CD8-positive, alpha-beta T cell (primary cell): ENCODE measurements at regions of chr2 and their contacts with region 1.

Region 1: DNA sequence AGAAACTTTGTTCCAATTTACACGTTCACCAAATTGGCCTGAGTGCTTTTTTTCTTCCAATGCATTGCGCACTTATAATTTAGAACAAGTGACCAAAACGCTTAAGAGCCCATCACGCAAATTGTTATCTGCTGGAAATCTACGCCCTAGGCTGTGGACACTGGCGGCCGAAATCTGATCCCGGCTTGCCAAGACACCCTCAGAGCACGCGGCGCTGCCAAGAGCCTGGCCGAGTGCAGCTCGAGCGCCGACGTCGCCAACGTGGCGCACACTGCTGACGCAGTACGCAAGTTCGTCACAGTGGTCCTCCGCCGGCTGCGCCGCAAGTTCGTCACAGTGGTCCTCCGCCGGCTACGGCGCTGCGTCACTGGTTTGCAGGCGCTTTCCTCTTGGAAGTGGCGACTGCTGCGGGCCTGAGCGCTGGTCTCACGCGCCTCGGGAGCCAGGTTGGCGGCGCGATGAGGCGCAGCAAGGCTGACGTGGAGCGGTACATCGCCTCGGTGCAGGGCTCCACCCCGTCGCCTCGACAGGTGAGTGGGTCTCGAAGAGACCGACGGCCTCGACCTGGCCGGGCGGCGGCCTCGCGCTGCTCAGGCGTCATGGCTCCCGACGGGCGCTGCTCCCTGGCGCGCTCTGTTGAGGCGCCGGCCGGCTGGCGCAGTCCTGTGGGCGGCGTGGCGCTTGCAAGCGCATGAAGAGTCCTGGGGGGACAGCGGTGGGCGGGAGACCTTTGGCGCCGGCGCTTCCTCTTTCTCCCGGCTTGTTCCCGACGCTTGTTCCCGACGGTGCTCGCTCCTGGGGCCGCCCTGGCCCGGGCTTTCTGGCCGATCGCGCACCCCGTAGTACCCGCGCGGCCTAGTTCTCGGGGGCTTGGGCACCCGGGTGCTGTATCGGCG is at the start of gene RANBP2:
- DNase-seq: peak; percentile 87 to 99 (median 94)
- ATAC-seq: peak; percentile 87
- H3K4me3 ChIP-seq: peak within 1 kb of the TSS; percentile 47 to 57
- H3K4me3 Mint-ChIP-seq: peak within 1 kb of the TSS; percentile 94
- H3K27ac ChIP-seq: peak within 1 kb of the TSS; percentile 91
- H3K27ac Mint-ChIP-seq: peak within 1 kb of the TSS; percentile 99
- H3K4me1 ChIP-seq: peaks cover 16% of the 10 kb centered on the region
- H3K4me1 Mint-ChIP-seq: peaks cover 24% of the 10 kb centered on the region
- H3K27me3 ChIP-seq: no peaks in the 10 kb centered on the region
- H3K27me3 Mint-ChIP-seq: no peaks in the 10 kb centered on the region
- CTCF ChIP-seq: no peak
- total RNA-seq, gene RANBP2: 238 to 240 TPM

Region 2: GRCh38 chr2:108448678-108449493 is 270.5 kb before region 1 on chr2 and contains the start of gene GCC2:
- CTCF ChIA-PET with region 1: no interaction called
- POLR2A ChIA-PET with region 1: no interaction called
- intact Hi-C with region 1: loop called (anchors 1 kb)
- DNase-seq: peak; percentile 94 to 98 (median 97)
- ATAC-seq: peak; percentile 90
- H3K4me3 ChIP-seq: peak within 1 kb of the TSS; percentile 97
- H3K4me3 Mint-ChIP-seq: peak within 1 kb of the TSS; percentile 97
- H3K27ac ChIP-seq: peak within 1 kb of the TSS; percentile 98 to 99
- H3K27ac Mint-ChIP-seq: peak within 1 kb of the TSS; percentile 99
- H3K4me1 ChIP-seq: peaks cover 18% of the 10 kb centered on the region
- H3K4me1 Mint-ChIP-seq: peaks cover 41% of the 10 kb centered on the region
- H3K27me3 ChIP-seq: no peaks in the 10 kb centered on the region
- H3K27me3 Mint-ChIP-seq: no peaks in the 10 kb centered on the region
- CTCF ChIP-seq: no peak
- total RNA-seq, gene GCC2: 147 to 157 TPM

Region 3: DNA sequence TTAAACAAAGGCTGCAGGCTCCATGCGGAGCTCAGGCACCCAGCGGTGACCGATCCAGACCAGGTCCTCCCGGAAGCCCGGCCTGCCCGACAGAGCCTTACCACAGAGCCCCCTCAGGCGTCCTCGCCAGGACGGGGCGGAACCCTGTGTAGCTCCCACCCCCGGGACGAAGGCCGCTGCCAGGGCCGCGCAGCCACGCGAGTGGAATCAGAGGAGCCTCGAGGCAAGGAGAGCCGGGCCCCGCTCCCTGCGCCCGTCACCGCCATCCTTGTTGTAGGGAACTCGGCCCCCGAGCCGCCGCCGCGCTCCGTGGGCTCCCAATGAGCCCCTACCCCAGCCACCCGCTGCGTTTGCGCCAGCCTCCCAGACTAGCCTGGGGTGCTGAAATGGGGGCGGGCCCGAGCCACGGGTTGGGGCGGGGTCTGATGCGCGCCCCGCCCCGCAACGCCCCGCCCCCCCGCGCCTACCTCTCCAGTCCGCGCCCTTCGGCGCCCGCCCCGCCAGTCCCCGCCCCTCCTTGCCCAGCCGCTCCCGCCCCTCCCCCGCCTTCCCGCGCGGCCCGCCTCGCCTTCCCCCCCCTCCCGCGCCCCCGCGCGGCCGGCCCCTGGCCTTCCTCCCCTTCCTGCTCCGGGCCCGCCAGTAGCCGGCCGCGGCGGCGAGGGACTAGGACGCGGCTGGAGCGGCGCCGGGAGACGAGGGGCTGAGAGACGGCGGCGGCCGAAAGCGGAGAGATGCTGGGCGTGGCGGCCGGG is 185.4 kb before region 1 on chr2 and contains the start of gene LIMS1:
- CTCF ChIA-PET with region 1: no interaction called
- POLR2A ChIA-PET with region 1: interaction called, 3 read pairs
- intact Hi-C with region 1: loop called (anchors 2 to 5 kb)
- DNase-seq: peak; percentile 67 to 90 (median 88)
- ATAC-seq: peak; percentile 95
- H3K4me3 ChIP-seq: peak within 1 kb of the TSS; percentile 76 to 88
- H3K4me3 Mint-ChIP-seq: peak within 1 kb of the TSS; percentile 98
- H3K27ac ChIP-seq: peak within 1 kb of the TSS; percentile 42 to 59
- H3K27ac Mint-ChIP-seq: peak within 1 kb of the TSS; percentile 88
- H3K4me1 ChIP-seq: peaks cover 7% of the 10 kb centered on the region
- H3K4me1 Mint-ChIP-seq: peaks cover 23% of the 10 kb centered on the region
- H3K27me3 ChIP-seq: no peaks in the 10 kb centered on the region
- H3K27me3 Mint-ChIP-seq: no peaks in the 10 kb centered on the region
- CTCF ChIP-seq: no peak
- total RNA-seq, gene LIMS1: 10.1 to 10.6 TPM

Region 4: GRCh38 chr2:108607706-108608301 is 111.6 kb before region 1 on chr2:
- CTCF ChIA-PET with region 1: interaction called, 3 read pairs
- POLR2A ChIA-PET with region 1: no interaction called
- intact Hi-C with region 1: loop called in 1 of 2 experiments (anchors 5 kb)
- DNase-seq: peak in 7 of 9 experiments; percentile 23 to 65 (median 48)
- ATAC-seq: peak; percentile 50
- H3K4me3 ChIP-seq: no peak overlapping the region
- H3K4me3 Mint-ChIP-seq: no peak overlapping the region
- H3K27ac ChIP-seq: no peak overlapping the region
- H3K27ac Mint-ChIP-seq: no peak overlapping the region
- H3K4me1 ChIP-seq: peaks cover 5% of the 10 kb centered on the region
- H3K4me1 Mint-ChIP-seq: peaks cover 29% of the 10 kb centered on the region
- H3K27me3 ChIP-seq: no peaks in the 10 kb centered on the region
- H3K27me3 Mint-ChIP-seq: no peaks in the 10 kb centered on the region
- CTCF ChIP-seq: peak; percentile 72

Region 5: DNA sequence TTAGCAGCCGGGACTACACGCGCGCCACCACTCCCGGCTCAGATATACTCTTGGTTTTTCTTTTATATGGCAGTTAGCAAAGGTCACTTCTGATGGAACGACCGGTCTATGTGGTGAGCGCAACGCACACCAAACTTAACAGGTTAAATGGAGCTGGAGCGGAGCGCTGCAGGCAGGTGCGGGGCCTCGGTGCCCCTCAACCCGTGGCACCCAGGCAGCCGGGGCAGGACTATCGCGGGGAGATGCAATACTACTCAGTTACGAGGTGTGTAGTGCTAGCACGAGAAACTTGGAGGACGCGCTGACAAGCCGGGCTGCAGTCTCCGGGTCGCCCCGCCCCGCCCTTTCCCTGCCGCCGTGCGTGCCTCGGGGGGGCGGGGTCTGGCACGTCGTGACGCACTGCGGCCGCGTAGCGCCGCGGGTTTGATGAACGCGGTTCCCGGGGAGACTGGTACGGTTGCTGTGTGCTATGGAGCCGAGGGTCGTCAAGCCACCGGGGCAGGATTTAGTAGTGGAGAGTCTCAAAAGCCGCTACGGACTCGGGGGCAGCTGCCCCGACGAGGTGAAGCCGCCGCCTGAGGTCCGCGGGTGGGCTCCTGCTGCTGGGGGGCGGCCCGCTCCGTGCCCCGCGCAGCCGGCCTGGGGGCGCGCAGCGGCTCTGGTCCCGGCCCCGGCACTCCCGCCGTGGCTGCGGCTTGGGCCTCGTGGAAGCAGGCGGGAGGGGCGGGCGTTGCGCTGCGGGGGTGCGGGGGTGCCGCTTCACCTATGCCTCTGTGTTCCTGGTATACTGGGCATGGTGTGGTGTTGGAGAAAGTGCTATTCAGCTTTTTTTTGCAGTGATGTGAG is 67.2 kb after region 1 on chr2 and contains the start of gene CCDC138:
- CTCF ChIA-PET with region 1: no interaction called
- POLR2A ChIA-PET with region 1: interaction called, 5 read pairs
- intact Hi-C with region 1: loop called (anchors 1 kb)
- DNase-seq: peak; percentile 85 to 95 (median 93)
- ATAC-seq: peak; percentile 97
- H3K4me3 ChIP-seq: peak within 1 kb of the TSS; percentile 76 to 90
- H3K4me3 Mint-ChIP-seq: peak within 1 kb of the TSS; percentile 99
- H3K27ac ChIP-seq: peak within 1 kb of the TSS; percentile 77 to 83
- H3K27ac Mint-ChIP-seq: peak within 1 kb of the TSS; percentile 97
- H3K4me1 ChIP-seq: peaks cover 10% of the 10 kb centered on the region
- H3K4me1 Mint-ChIP-seq: peaks cover 22% of the 10 kb centered on the region
- H3K27me3 ChIP-seq: no peaks in the 10 kb centered on the region
- H3K27me3 Mint-ChIP-seq: no peaks in the 10 kb centered on the region
- CTCF ChIP-seq: no peak
- total RNA-seq, gene CCDC138: 4.6 to 5.9 TPM